GM10248 (cell line): ENCODE measurements at regions of chr5 and their contacts with region 1.

Region 1: GRCh38 chr5:149711338-149711737 is 18.8 kb upstream of the PPARGC1B start:
- DNase-seq: no peak
- CTCF ChIP-seq: no peak

Region 2: GRCh38 chr5:149551200-149552037 is 159.9 kb before region 1 on chr5 and contains the start of gene CSNK1A1:
- CTCF ChIA-PET with region 1: no interaction called
- POLR2A ChIA-PET with region 1: no interaction called
- DNase-seq: peak; percentile 100
- CTCF ChIP-seq: peak; percentile 69

Region 3: GRCh38 chr5:149618581-149619251 is 92.6 kb before region 1 on chr5:
- CTCF ChIA-PET with region 1: no interaction called
- POLR2A ChIA-PET with region 1: no interaction called
- DNase-seq: peak; percentile 70
- CTCF ChIP-seq: peak; percentile 61

Region 4: GRCh38 chr5:149724130-149724840 is 12.9 kb after region 1 on chr5:
- CTCF ChIA-PET with region 1: interaction called, 15 read pairs
- POLR2A ChIA-PET with region 1: no interaction called
- DNase-seq: peak; percentile 55
- CTCF ChIP-seq: no peak